BJ (cell line): ENCODE measurements at regions of chr5 and their contacts with region 1.

Region 1: DNA sequence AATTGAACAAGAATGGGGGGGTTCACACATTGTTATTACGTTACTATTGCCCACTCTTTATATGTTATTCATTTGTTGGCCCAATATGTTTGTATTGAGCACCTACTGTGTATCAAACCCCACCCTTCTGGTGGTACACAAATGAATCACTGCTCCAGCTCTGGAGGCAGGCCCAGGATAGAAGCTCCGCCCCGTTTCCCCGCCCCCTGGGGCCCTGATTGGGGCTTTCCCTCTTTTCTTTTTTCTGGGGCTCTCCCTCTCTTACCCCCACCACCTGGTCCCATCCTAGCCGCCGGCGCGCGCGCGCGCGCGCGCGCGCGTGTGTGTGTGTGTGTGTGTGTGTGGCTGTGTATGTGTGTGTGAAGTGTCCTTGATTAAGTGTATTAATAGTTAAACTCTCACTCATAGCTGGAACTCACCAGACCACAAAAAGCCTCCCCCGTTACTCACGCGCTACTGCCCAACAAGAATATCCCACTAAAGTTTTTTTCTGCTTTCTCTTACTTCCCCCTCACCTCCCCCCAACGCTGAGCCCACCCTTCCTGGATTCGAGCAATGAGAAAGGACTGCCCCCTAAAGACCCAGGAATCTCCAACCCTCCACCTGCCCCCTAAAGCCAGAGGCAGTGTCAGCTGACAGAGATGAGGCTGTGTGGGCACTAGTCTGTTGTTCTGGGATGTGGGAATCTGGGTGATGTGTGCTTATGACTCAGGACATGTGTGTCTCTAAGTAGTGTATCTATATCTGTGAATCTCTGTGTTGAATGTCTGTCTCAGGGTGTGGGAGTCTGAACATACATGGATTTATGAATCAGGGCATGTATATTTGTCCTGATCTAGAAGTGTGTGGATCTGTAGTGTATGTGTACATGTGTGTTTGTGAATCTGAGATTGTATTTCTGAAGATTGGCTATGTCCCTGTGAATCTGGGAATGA is 4.0 kb downstream of the CXXC5 start:
- DNase-seq: peak; percentile 52
- H3K4me3 ChIP-seq: peak overlapping the region; percentile 24
- H3K27me3 ChIP-seq: no peaks in the 10 kb centered on the region
- CTCF ChIP-seq: no peak

Region 2: DNA sequence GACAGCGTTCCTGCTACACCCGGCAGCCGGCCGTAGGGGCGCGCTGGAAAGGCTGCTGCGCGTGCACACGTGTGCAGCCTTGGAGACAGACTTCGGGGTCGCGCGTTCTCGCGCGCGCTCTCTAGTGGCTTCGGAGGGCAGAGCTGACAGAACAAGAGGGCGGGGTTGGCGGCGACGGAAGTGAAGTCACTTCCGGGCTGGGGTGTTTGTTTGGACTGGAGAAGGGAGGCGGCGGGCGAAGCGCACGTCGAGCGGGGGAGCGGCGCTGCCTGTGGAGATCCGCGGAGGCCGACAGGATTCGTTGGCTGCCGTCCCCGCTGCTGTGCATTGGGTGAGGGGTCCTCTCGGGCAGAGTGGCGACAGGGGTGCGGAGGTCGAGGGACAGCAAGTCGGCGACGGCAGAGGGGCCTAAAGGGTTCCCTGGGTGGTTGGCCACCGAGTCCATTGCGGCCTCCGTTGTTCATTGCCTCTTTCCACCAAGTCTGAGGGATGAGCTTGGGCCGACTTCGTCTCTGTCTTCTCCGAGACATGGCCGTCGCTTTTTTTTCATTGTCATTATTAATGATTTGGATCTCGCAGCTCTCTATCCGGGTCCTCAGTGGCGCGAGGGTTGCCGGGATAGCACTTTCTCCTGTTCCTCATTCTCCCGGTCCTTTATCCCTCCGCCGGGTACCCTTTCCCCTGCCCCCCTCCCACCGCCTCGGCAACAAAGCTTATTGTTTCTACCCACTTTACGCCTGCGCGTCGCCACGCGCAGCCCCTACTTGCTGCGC is 310.3 kb before region 1 on chr5 and contains the start of gene PAIP2:
- CTCF ChIA-PET with region 1: no interaction called
- POLR2A ChIA-PET with region 1: interaction called, 15 read pairs
- DNase-seq: peak; percentile 88
- H3K4me3 ChIP-seq: peak within 1 kb of the TSS; percentile 100
- H3K27me3 ChIP-seq: no peaks in the 10 kb centered on the region
- CTCF ChIP-seq: peak; percentile 90
- polyA plus RNA-seq, gene PAIP2: 35.4 and 65.2 TPM in 2 replicates

Region 3: GRCh38 chr5:139495638-139496435 is 156.3 kb before region 1 on chr5:
- CTCF ChIA-PET with region 1: no interaction called
- POLR2A ChIA-PET with region 1: interaction called, 18 read pairs
- DNase-seq: no peak
- H3K4me3 ChIP-seq: no peak overlapping the region
- H3K27me3 ChIP-seq: no peaks in the 10 kb centered on the region
- CTCF ChIP-seq: no peak

Region 4: DNA sequence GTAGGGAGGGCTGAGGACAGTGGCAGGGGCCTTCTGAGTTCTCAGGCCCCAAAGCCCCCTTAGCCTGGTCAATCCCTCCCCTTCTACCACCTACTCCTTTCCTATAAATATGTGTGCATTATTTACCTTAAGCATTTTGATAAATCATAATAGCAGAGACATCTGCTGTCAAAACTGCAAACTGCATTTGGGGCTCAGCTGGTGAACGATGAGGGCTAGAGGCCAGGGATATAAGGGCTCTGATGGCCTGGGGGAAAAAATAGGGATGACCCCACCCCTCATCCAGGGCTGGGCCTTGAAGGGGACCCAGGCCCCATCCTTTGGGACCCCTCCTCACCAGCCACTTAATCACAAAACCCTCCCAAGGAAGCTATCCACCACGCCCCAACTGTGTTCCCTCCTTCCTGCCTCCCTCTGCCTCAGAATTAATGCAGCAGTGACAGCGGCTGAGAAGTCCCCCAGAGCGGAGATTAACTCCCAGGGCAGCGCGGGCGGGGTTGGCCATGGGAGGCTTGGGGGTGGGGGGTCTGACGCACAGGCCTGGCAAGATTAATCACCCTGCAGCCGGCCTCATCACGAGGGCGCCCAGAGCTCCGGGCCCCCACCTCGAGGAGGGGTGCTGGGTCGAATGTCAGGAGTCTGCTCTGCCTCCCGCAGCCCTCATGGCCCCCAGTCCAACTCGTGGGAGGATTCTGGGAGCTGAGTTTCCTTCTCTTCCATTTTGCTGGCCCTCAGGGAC is 38.1 kb after region 1 on chr5:
- CTCF ChIA-PET with region 1: interaction called, 37 read pairs
- POLR2A ChIA-PET with region 1: no interaction called
- DNase-seq: no peak
- H3K4me3 ChIP-seq: no peak overlapping the region
- H3K27me3 ChIP-seq: no peaks in the 10 kb centered on the region
- CTCF ChIP-seq: peak; percentile 56